ENCODE measurements at regions of chr5 and their contacts with region 1.

Region 1: DNA sequence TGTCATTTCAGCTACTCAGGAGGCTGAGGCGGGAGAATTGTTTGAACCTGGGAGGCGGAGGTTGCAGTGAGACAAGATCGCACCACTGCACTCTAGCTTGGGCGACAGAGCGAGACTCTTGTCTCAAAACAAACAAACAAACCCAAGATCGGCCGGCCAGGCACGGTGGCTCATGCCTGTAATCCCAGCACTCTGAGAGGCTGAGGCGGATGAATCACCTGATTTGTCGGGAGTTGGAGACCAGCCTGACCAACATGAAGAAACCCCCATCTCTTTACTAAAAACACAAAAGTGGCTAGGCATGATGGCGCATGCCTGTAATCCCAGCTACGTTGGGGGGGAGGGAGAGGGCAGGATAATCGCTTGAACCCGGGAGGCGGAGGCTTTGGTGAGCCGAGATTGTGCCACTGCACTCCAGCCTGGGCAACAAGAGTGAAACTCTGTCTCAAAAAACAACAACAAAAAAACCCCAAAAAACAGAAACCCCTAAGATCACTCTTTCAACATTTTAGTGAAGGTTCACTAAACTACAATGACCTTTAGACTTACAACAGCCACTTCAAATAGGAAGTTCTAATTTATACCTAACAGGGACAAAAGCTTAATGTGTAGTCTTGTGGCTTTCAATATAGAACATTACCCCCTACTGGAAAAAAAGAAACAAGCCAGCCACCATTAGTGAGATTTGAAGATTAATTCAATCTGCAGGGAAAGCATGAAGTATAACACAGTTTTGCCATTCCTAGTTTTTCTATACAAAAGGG is 7.0 kb downstream of the HSPA9 start:
- DNase-seq: no peak
- H3K4me3 Mint-ChIP-seq: no peak overlapping the region
- H3K27ac Mint-ChIP-seq: no peak overlapping the region
- H3K4me1 Mint-ChIP-seq: peaks cover 58% of the 10 kb centered on the region
- H3K27me3 Mint-ChIP-seq: no peaks in the 10 kb centered on the region

Region 2: GRCh38 chr5:138542956-138543729 is 25.1 kb before region 1 on chr5 and contains the start of gene ETF1:
- CTCF ChIA-PET with region 1: interaction called, 20 read pairs
- POLR2A ChIA-PET with region 1: no interaction called
- DNase-seq: peak; percentile 100
- H3K4me3 Mint-ChIP-seq: peak within 1 kb of the TSS; percentile 99
- H3K27ac Mint-ChIP-seq: peak within 1 kb of the TSS; percentile 100
- H3K4me1 Mint-ChIP-seq: peaks cover 65% of the 10 kb centered on the region
- H3K27me3 Mint-ChIP-seq: no peaks in the 10 kb centered on the region
- total RNA-seq, gene ETF1: 65.3 to 72.1 TPM

Region 3: GRCh38 chr5:138654281-138654867 is 86.1 kb after region 1 on chr5:
- CTCF ChIA-PET with region 1: no interaction called
- POLR2A ChIA-PET with region 1: no interaction called
- DNase-seq: peak; percentile 65
- H3K4me3 Mint-ChIP-seq: peak overlapping the region; percentile 12
- H3K27ac Mint-ChIP-seq: peak overlapping the region; percentile 34
- H3K4me1 Mint-ChIP-seq: peaks cover 17% of the 10 kb centered on the region
- H3K27me3 Mint-ChIP-seq: peaks cover 91% of the 10 kb centered on the region

Region 4: DNA sequence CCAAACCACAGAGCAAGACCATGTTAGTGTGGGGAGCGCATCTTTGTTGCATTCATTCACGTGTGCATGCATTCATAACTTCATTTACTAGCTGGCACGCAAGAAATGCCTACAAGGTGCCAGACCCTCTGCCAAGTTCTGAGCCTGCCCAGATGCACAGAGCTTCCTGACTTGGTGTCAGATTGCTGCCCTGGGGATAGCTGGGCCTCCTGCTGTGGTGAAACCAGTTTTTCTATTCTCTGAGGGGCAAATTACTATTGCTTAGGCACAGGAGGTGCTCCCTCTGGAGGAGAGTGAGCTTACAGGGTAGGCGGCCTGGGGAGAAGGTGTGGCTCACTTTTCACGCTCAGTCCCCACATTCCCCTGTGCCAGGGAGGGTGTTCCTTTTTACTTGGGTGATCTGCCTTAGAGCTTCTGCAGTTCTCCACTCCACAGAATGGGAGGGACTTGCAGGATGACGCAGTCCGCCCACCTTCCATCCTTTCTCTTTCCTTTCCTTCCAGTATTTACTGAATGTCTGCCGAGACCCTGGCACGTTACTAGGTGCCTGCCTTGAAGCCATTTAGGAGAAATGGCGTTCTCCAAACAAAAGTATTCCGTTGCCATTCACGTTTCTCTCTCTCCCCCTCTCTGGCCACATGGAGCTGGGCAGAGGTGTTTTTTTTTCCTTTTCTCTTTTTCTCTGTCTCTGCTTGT is 157.0 kb after region 1 on chr5:
- CTCF ChIA-PET with region 1: no interaction called
- POLR2A ChIA-PET with region 1: no interaction called
- DNase-seq: no peak
- H3K4me3 Mint-ChIP-seq: no peak overlapping the region
- H3K27ac Mint-ChIP-seq: no peak overlapping the region
- H3K4me1 Mint-ChIP-seq: peaks cover 16% of the 10 kb centered on the region
- H3K27me3 Mint-ChIP-seq: peaks cover 33% of the 10 kb centered on the region